ENCODE measurements at regions of chr9 and their contacts with region 1.

Region 1: GRCh38 chr9:77177161-77177893 is at the start of gene VPS13A:
- DNase-seq: peak; percentile 97
- H3K4me3 ChIP-seq: peak within 1 kb of the TSS; percentile 62 to 83 (median 73)
- H3K27ac ChIP-seq: peak within 1 kb of the TSS; percentile 85 to 92 (median 88)
- H3K4me1 ChIP-seq: peaks cover 0 to 21% (median 10%) of the 10 kb centered on the region in 4 donors
- H3K27me3 ChIP-seq: no peaks in the 10 kb centered on the region
- CTCF ChIP-seq: peak in 1 of 4 experiments; percentile 11
- EP300 ChIP-seq: no peak
- POLR2A ChIP-seq: peak; percentile 43 to 49
- total RNA-seq, gene VPS13A: 32.6 to 71.5 (median 35.8) TPM

Region 2: DNA sequence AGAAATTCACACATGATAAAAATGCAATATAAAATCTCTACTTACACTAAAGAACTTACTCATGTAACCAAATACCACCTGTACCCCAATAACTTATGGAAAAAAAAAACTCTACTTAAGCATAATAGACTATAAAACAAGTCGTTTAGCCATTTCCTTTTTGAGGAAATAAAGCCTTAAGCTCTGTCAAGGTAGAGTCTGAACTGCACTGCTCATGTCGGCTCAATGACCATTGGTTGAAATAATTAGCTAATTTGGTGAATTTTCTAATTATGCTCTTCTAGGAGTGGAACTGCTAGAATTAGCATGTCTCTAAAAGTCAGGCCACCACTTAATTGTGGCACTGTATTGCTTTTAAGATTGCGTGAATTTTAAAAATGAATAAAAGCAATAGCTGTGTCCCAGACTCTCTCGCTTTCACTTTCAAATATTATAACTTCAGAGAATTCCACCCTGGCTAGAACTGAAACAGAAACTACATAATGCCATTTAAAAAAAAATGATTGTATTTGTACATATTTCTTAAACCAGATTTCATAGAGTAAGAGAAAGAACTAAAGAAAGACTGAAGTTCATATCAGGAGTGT is 526.1 kb before region 1 on chr9:
- intact Hi-C with region 1: no loop called
- DNase-seq: no peak
- H3K4me3 ChIP-seq: peak overlapping the region in 3 of 4 donors; percentile 19 to 31 (median 23)
- H3K27ac ChIP-seq: peak overlapping the region; percentile 27 to 74 (median 34)
- H3K4me1 ChIP-seq: peaks cover 0 to 54% (median 43%) of the 10 kb centered on the region in 4 donors
- H3K27me3 ChIP-seq: no peaks in the 10 kb centered on the region
- CTCF ChIP-seq: no peak
- EP300 ChIP-seq: no peak
- POLR2A ChIP-seq: no peak

Region 3: DNA sequence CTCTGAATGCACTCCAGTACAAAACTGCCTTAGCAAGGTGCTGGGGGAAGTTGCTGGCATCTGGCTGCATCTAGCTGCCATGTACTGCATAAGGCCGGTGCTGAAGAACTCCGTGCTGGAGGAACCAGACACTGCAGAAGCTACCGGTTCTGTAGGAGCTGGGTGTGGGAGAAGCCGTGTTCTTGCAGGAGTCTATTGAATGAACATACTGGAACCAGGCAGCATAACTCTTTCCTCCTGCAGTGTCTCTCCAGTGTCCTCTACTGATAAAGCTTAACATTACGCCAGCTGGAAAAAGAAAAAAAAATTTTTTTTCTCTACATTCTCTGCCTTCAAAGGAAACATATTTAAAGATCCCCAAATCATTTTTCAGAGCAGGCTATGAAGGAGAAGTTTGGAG is 38.5 kb after region 1 on chr9:
- intact Hi-C with region 1: loop called (anchors 5 kb)
- DNase-seq: no peak
- H3K4me3 ChIP-seq: no peak overlapping the region
- H3K27ac ChIP-seq: no peak overlapping the region
- H3K4me1 ChIP-seq: peaks cover 0 to 12% (median 7%) of the 10 kb centered on the region in 4 donors
- H3K27me3 ChIP-seq: no peaks in the 10 kb centered on the region
- CTCF ChIP-seq: peak in 2 of 4 experiments; percentile 9 to 11
- EP300 ChIP-seq: no peak
- POLR2A ChIP-seq: no peak

Region 4: GRCh38 chr9:77743386-77743785 is 566.1 kb after region 1 on chr9:
- intact Hi-C with region 1: loop called (anchors 10 kb)
- DNase-seq: no peak
- H3K4me3 ChIP-seq: no peak overlapping the region
- H3K27ac ChIP-seq: peak overlapping the region in 3 of 4 donors; percentile 46 to 70 (median 66)
- H3K4me1 ChIP-seq: peaks cover 0 to 65% (median 48%) of the 10 kb centered on the region in 4 donors
- H3K27me3 ChIP-seq: no peaks in the 10 kb centered on the region
- CTCF ChIP-seq: no peak
- EP300 ChIP-seq: no peak
- POLR2A ChIP-seq: no peak